CD4-positive, alpha-beta memory T cell (primary cell): ENCODE measurements at regions of chr12 and their contacts with region 1.

Region 1: GRCh38 chr12:53180220-53180930 is at the starts of genes CSAD and ZNF740:
- DNase-seq: peak; percentile 96 to 99 (median 97)
- H3K4me3 ChIP-seq: peak within 1 kb of the TSS; percentile 56 to 74
- H3K4me3 Mint-ChIP-seq: peak within 1 kb of the TSS; percentile 90 to 96 (median 91)
- H3K27ac ChIP-seq: peak within 1 kb of the TSS; percentile 89
- H3K27ac Mint-ChIP-seq: peak within 1 kb of the TSS; percentile 88 to 98 (median 97)
- H3K4me1 ChIP-seq: peaks cover 50% of the 10 kb centered on the region
- H3K4me1 Mint-ChIP-seq: peaks cover 36 to 62% (median 49%) of the 10 kb centered on the region in 4 donors
- H3K27me3 ChIP-seq: no peaks in the 10 kb centered on the region
- H3K27me3 Mint-ChIP-seq: no peaks in the 10 kb centered on the region
- total RNA-seq, gene CSAD: 62.5 to 64.2 TPM
- total RNA-seq, gene ZNF740: 109 to 113 TPM

Region 2: DNA sequence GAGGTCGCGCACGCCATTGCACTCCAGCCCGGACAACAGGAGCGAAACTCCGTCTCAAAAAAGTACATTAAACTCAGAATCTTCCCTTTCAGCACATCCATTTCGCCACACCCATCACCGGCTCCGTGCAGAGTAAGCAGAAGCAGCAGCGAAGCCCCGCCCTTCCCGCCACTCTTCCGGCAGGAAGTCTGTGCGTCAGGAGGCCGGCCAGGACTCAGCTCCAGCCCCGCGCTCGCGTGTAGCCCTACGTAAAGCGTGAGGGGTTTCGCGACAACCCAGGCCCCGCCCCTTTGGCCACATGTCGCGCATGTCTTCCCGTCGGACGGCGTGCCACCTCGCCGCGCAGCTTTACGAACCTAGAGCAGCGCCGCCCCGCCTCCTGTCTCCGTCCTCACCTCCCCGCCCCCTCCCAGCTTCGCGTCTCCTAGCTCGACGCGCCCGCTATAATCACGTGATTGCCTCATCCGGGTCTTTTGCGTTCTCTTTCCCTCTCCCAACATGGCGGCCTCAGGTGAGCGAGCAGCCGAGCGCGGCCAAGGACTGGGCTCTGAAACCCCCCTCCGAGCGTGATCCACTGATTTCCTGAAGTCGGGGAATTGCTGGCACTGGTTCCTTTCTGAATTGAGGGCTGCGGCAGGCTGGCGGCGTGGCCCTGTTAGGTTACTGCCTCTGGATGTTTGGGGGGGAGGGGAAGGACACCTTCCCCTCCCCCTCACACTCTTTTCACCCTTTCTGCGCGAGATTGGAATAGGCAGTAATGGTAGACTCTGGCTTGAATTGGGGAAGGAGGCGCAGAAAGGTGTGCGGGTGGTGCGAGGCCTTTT is 174.2 kb before region 1 on chr12 and contains the start of gene EIF4B:
- CTCF ChIA-PET with region 1: no interaction called
- POLR2A ChIA-PET with region 1: interaction called, 7 read pairs
- intact Hi-C with region 1: loop called (anchors 1 kb)
- DNase-seq: peak; percentile 97 to 100 (median 100)
- H3K4me3 ChIP-seq: peak within 1 kb of the TSS; percentile 99 to 100
- H3K4me3 Mint-ChIP-seq: peak within 1 kb of the TSS; percentile 99 to 100 (median 99)
- H3K27ac ChIP-seq: peak within 1 kb of the TSS; percentile 94
- H3K27ac Mint-ChIP-seq: peak within 1 kb of the TSS; percentile 99 to 100 (median 99)
- H3K4me1 ChIP-seq: peaks cover 51% of the 10 kb centered on the region
- H3K4me1 Mint-ChIP-seq: peaks cover 26 to 58% (median 43%) of the 10 kb centered on the region in 4 donors
- H3K27me3 ChIP-seq: no peaks in the 10 kb centered on the region
- H3K27me3 Mint-ChIP-seq: no peaks in the 10 kb centered on the region
- total RNA-seq, gene EIF4B: 730 to 777 TPM

Region 3: GRCh38 chr12:53079226-53080117 is 100.9 kb before region 1 on chr12 and contains the start of gene SPRYD3:
- CTCF ChIA-PET with region 1: no interaction called
- POLR2A ChIA-PET with region 1: interaction called, 13 read pairs
- intact Hi-C with region 1: loop called (anchors 1 kb)
- DNase-seq: peak; percentile 96 to 99 (median 97)
- H3K4me3 ChIP-seq: peak within 1 kb of the TSS; percentile 73
- H3K4me3 Mint-ChIP-seq: peak within 1 kb of the TSS; percentile 89 to 97 (median 94)
- H3K27ac ChIP-seq: peak within 1 kb of the TSS; percentile 83
- H3K27ac Mint-ChIP-seq: peak within 1 kb of the TSS; percentile 92 to 98 (median 95)
- H3K4me1 ChIP-seq: peaks cover 29% of the 10 kb centered on the region
- H3K4me1 Mint-ChIP-seq: peaks cover 23 to 61% (median 39%) of the 10 kb centered on the region in 4 donors
- H3K27me3 ChIP-seq: no peaks in the 10 kb centered on the region
- H3K27me3 Mint-ChIP-seq: no peaks in the 10 kb centered on the region
- total RNA-seq, gene SPRYD3: 54.3 to 59.3 TPM

Region 4: GRCh38 chr12:53115112-53115890 is 65.1 kb before region 1 on chr12:
- CTCF ChIA-PET with region 1: no interaction called
- POLR2A ChIA-PET with region 1: no interaction called
- intact Hi-C with region 1: no loop called
- DNase-seq: no peak
- H3K4me3 ChIP-seq: no peak overlapping the region
- H3K4me3 Mint-ChIP-seq: no peak overlapping the region
- H3K27ac ChIP-seq: no peak overlapping the region
- H3K27ac Mint-ChIP-seq: no peak overlapping the region
- H3K4me1 ChIP-seq: no peaks in the 10 kb centered on the region
- H3K4me1 Mint-ChIP-seq: no peaks in the 10 kb centered on the region
- H3K27me3 ChIP-seq: no peaks in the 10 kb centered on the region
- H3K27me3 Mint-ChIP-seq: no peaks in the 10 kb centered on the region

Region 5: GRCh38 chr12:53213348-53213747 is 33.0 kb after region 1 on chr12:
- CTCF ChIA-PET with region 1: interaction called, 28 read pairs
- POLR2A ChIA-PET with region 1: interaction called, 463 read pairs
- intact Hi-C with region 1: no loop called
- DNase-seq: peak; percentile 77 to 84 (median 78)
- H3K4me3 ChIP-seq: no peak overlapping the region
- H3K4me3 Mint-ChIP-seq: peak overlapping the region in 1 of 8 donors; percentile 41
- H3K27ac ChIP-seq: peak overlapping the region; percentile 36
- H3K27ac Mint-ChIP-seq: peak overlapping the region; percentile 46 to 97 (median 87)
- H3K4me1 ChIP-seq: peaks cover 84% of the 10 kb centered on the region
- H3K4me1 Mint-ChIP-seq: peaks cover 45 to 81% (median 68%) of the 10 kb centered on the region in 4 donors
- H3K27me3 ChIP-seq: no peaks in the 10 kb centered on the region
- H3K27me3 Mint-ChIP-seq: no peaks in the 10 kb centered on the region

Region 6: DNA sequence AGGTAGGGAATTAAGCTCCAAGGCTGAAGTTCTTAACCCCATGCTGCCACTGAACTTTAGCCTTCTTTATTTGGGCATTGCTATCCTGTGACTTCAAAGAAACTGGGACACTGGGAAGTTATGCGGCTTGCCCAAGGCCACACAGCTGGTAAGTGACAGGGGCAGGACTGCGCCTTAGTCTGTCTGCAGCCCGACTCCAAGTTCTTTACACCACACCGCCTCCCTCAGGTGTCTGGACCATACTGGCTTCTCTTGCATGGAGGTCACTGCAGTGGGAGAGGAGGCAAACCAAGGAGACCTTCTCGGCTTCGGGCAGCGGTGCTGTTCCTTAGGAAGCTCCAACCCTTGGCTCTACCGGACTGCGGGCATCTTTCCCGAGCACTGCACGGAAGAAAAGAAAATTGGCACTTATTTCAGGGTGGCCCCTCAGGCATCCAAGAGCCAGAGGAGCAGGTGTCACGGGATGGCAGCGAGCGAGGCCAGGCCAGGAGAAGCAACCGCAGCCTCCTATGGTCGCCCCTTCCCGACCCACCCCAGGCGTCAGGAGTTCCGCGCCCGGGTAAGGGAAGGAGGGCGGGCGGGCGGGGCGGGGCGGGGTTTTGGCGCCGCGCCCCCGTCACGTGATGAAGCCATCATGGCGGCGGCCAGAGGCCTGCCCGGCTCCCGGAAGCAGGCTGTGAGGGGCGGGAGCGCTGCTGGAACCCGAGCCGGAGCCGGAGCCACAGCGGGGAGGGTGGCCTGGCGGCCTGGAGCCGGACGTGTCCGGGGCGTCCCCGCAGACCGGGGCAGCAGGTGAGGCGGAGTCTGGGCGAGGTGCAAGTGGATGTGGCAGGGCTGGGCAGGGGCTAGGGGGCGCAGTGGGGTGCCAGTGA is 71.3 kb after region 1 on chr12:
- CTCF ChIA-PET with region 1: interaction called, 3 read pairs
- POLR2A ChIA-PET with region 1: interaction called, 19 read pairs
- intact Hi-C with region 1: no loop called
- DNase-seq: peak; percentile 67 to 78 (median 71)
- H3K4me3 ChIP-seq: peak overlapping the region; percentile 73 to 92
- H3K4me3 Mint-ChIP-seq: peak overlapping the region; percentile 96 to 100 (median 98)
- H3K27ac ChIP-seq: peak overlapping the region; percentile 83
- H3K27ac Mint-ChIP-seq: peak overlapping the region; percentile 96 to 99 (median 98)
- H3K4me1 ChIP-seq: peaks cover 46% of the 10 kb centered on the region
- H3K4me1 Mint-ChIP-seq: peaks cover 23 to 52% (median 41%) of the 10 kb centered on the region in 4 donors
- H3K27me3 ChIP-seq: no peaks in the 10 kb centered on the region
- H3K27me3 Mint-ChIP-seq: no peaks in the 10 kb centered on the region

Region 7: DNA sequence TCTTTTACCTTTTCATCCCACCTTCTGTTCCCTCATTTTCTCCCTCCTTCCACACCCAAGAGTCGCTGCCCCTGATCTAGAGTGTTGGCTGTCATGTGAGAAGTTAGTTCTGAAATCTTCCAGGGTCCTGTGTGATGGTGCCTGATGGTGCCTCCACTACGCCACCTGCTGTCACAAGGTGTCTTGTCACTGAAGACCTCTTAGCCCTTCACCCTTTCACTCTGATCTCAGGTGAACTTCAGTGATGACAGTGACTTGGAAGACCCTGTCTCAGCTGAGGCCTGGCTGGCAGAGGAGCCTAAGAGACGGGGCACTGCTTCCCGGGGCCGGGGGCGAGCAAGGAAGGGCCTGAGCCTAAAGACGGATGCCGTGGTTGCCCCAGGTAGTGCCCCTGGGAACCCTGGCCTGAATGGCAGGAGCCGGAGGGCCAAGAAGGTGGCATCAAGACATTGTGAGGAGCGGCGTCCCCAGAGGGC is 107.4 kb after region 1 on chr12:
- CTCF ChIA-PET with region 1: interaction called, 5 read pairs
- POLR2A ChIA-PET with region 1: interaction called, 3 read pairs
- intact Hi-C with region 1: loop called (anchors 1 kb)
- DNase-seq: peak; percentile 68 to 73 (median 72)
- H3K4me3 ChIP-seq: no peak overlapping the region
- H3K4me3 Mint-ChIP-seq: peak overlapping the region in 1 of 8 donors; percentile 32
- H3K27ac ChIP-seq: no peak overlapping the region
- H3K27ac Mint-ChIP-seq: peak overlapping the region in 4 of 7 donors; percentile 3 to 71 (median 34)
- H3K4me1 ChIP-seq: no peaks in the 10 kb centered on the region
- H3K4me1 Mint-ChIP-seq: peaks cover 4 to 7% (median 5%) of the 10 kb centered on the region in 4 donors
- H3K27me3 ChIP-seq: no peaks in the 10 kb centered on the region
- H3K27me3 Mint-ChIP-seq: no peaks in the 10 kb centered on the region

Region 8: GRCh38 chr12:53441040-53441833 is 260.9 kb after region 1 on chr12 and contains the start of gene PRR13:
- CTCF ChIA-PET with region 1: no interaction called
- POLR2A ChIA-PET with region 1: interaction called, 3 read pairs
- intact Hi-C with region 1: loop called (anchors 2 kb)
- DNase-seq: peak; percentile 95 to 100 (median 97)
- H3K4me3 ChIP-seq: peak within 1 kb of the TSS; percentile 75 to 91
- H3K4me3 Mint-ChIP-seq: peak within 1 kb of the TSS; percentile 95 to 99 (median 97)
- H3K27ac ChIP-seq: peak within 1 kb of the TSS; percentile 98
- H3K27ac Mint-ChIP-seq: peak within 1 kb of the TSS; percentile 91 to 99 (median 96)
- H3K4me1 ChIP-seq: peaks cover 40% of the 10 kb centered on the region
- H3K4me1 Mint-ChIP-seq: peaks cover 22 to 59% (median 40%) of the 10 kb centered on the region in 4 donors
- H3K27me3 ChIP-seq: no peaks in the 10 kb centered on the region
- H3K27me3 Mint-ChIP-seq: no peaks in the 10 kb centered on the region
- total RNA-seq, gene PRR13: 242 to 247 TPM